ENCODE measurements at regions of chr14 and their contacts with region 1.

Region 1: DNA sequence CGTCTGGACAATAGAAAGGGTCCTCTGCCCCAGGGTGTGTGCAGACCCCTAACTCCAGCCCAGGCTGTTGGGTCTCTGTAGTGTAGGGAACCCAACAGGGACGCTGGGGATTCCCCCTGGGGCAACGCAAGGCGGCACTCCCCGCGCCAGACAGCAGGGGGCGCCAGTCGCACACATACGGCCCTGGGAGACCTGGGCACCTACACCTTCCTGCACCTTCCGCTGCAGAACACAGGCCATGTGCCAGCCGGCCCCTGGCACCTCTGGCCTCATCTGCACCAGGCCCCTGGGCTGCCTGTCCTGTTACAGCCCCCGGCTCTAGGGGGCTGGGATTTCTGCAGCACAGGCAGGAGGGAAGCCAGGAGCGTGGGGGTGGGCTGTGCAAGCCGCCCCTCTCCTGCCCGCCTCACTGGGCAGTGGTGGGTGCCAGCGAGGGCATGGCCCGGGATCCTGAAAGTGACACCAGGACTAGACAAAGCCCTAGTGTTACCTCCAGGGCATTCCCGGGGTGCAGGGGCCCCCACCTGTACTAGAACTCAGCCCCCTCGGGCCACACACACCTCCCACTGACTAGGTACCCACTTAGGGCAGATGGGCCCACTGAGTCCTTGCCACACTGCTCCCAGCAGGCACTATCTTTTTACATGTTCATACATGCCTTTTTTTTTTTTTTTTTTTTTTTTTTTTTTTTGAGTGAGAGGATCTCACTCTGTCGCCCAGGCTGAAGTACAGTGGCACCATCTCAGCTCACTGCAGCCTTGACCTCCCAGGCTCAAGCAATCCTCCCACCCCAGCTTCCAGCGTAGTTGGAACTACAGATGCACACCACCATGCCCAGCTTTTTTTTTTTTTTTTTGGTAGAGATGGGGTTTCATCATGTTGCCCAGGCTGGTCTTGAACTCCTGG is 37.5 kb downstream of the CCNK start:
- DNase-seq: peak; percentile 32 to 64 (median 50)
- H3K4me3 ChIP-seq: no peak overlapping the region
- H3K4me3 Mint-ChIP-seq: no peak overlapping the region
- H3K27ac ChIP-seq: no peak overlapping the region
- H3K27ac Mint-ChIP-seq: no peak overlapping the region
- H3K4me1 ChIP-seq: no peaks in the 10 kb centered on the region
- H3K4me1 Mint-ChIP-seq: peaks cover 2% of the 10 kb centered on the region
- H3K27me3 ChIP-seq: no peaks in the 10 kb centered on the region
- H3K27me3 Mint-ChIP-seq: peaks cover 0 to 9% (median 5%) of the 10 kb centered on the region in 3 donors
- CTCF ChIP-seq: peak; percentile 98

Region 2: GRCh38 chr14:99628832-99629618 is 110.3 kb after region 1 on chr14:
- intact Hi-C with region 1: loop called (anchors 2 to 5 kb)
- DNase-seq: peak; percentile 15 to 48 (median 25)
- H3K4me3 ChIP-seq: no peak overlapping the region
- H3K4me3 Mint-ChIP-seq: no peak overlapping the region
- H3K27ac ChIP-seq: no peak overlapping the region
- H3K27ac Mint-ChIP-seq: no peak overlapping the region
- H3K4me1 ChIP-seq: no peaks in the 10 kb centered on the region
- H3K4me1 Mint-ChIP-seq: no peaks in the 10 kb centered on the region
- H3K27me3 ChIP-seq: no peaks in the 10 kb centered on the region
- H3K27me3 Mint-ChIP-seq: peaks cover 5 to 10% (median 9%) of the 10 kb centered on the region in 3 donors
- CTCF ChIP-seq: peak; percentile 90